Uterus (tissue), 4 donors: ENCODE measurements at regions of chr5 and their contacts with region 1.

Region 1: DNA sequence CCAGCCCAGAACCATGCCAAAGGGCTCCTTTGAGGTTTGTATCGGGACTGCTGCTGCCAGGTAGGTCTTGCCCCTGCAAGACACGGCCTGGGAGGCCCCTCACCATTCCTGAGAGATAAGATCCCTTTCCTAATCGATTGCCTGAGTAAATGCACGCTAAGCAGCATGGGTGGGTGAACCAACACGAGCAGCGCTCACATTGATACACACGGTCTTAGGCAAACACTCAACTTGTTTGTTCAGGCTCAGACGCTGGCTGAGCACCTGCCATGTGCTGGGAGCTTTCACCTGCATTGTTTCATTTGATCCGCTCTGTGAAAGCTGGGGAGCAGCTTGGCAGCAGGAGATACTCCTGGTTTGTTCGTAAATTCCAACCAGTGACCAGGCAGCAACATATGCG is 76.9 kb upstream of the NEURL1B start:
- DNase-seq: no peak
- H3K4me3 ChIP-seq: no peak overlapping the region
- H3K27ac ChIP-seq: no peak overlapping the region
- H3K4me1 ChIP-seq: peaks cover 0 to 4% of the 10 kb centered on the region in 2 donors
- H3K27me3 ChIP-seq: no peaks in the 10 kb centered on the region
- CTCF ChIP-seq: no peak
- POLR2A ChIP-seq: no peak

Region 2: DNA sequence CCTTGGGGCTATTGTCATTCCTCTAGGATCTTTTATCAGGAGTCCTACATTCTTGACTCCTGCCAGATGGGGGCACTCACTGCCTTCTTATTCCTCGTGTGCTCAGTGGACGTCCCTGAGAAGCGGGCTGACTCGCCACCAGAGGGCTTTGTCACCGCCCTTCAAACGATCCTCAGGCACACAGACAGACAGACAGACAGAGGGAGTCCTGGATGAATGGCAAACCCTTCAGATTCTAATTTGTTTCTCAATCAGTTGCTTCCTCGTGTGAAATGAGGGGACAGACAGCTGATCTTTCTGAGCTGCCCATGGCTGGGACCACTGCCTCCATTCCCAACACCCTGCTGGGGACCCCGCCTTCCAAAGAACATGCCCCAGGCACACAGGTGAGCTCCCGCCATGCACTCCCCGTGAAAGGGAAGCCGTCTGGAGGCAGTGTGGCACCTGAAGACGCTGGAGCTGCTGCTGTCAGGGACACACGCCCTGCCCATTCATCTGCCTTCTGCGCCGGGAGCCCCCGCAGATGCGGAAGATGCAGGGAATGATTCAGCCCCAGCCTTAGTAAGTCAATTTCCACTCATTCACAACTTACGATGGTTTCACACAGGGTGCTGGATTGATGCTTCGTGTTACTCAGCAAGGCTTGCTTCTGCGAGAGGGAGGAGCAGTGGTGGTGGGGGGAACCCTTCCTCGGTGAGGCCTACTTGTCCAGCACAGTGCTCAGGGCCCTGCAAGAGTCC is 85.0 kb before region 1 on chr5:
- intact Hi-C with region 1: no loop called
- DNase-seq: peak; percentile 86 to 88
- H3K4me3 ChIP-seq: no peak overlapping the region
- H3K27ac ChIP-seq: peak overlapping the region; percentile 47 to 66
- H3K4me1 ChIP-seq: no peaks in the 10 kb centered on the region
- H3K27me3 ChIP-seq: no peaks in the 10 kb centered on the region
- CTCF ChIP-seq: peak; percentile 80 to 99 (median 94)
- POLR2A ChIP-seq: no peak

Region 3: GRCh38 chr5:172640822-172641358 is 76.7 kb after region 1 on chr5 and contains the start of gene NEURL1B:
- intact Hi-C with region 1: loop called (anchors 10 kb)
- DNase-seq: peak; percentile 82 to 83
- H3K4me3 ChIP-seq: peak within 1 kb of the TSS; percentile 79 to 92
- H3K27ac ChIP-seq: peak within 1 kb of the TSS; percentile 85 to 98
- H3K4me1 ChIP-seq: peaks cover 4 to 12% of the 10 kb centered on the region in 2 donors
- H3K27me3 ChIP-seq: no peaks in the 10 kb centered on the region
- CTCF ChIP-seq: peak; percentile 15 to 57 (median 36)
- POLR2A ChIP-seq: peak; percentile 61 to 74
- total RNA-seq, gene NEURL1B: 51.1 to 136 (median 74.1) TPM